ENCODE measurements at regions of chr12 and their contacts with region 1.

Region 1: DNA sequence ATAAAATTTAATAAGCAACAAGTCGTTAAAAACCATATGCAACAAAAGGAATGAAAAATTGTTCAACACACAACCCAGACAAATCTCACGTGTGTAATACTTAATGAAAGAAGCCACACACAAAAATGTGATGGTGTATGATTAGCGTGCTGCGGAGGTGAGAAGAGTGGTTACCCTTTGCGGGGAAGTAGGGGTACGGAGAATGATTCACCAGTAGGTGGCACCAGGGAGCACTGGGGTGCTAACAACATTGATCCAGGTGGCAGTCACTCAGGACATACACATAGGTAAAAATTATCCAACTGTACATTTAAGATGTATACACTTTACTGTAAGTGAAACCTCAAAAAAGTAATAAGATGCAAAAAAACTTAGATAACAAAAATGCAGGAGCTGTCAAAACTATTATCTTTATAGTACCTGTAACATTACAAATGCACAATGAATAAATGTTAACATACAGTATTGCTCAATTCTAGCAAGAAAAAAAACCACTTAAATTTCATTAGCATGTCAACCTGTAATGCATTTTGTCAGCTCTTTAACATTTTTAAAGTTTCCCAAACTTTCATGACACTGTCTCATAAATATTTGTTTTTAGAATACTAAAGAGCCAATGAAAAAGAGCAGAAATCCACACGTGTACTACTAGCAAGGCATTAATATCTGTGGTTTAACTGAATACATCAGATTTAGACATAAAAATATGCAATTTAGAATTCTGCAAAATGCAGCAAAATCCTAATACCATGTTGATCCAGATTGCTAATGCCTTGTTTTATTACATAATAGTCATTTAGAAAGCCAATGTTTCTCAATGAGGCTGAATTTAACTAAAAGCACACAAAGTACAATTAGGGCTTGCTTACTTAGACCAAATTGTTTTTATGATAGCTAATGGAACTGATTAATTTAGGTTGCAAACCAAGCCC is 46.7 kb downstream of the TMCC3 start:
- DNase-seq: peak in 7 of 9 donors; percentile 16 to 58 (median 37)
- ATAC-seq: peak; percentile 80
- H3K4me3 ChIP-seq: no peak overlapping the region
- H3K4me3 Mint-ChIP-seq: no peak overlapping the region
- H3K27ac ChIP-seq: no peak overlapping the region
- H3K27ac Mint-ChIP-seq: no peak overlapping the region
- H3K4me1 ChIP-seq: no peaks in the 10 kb centered on the region
- H3K4me1 Mint-ChIP-seq: peaks cover 0 to 7% (median 0%) of the 10 kb centered on the region in 7 donors
- H3K27me3 ChIP-seq: no peaks in the 10 kb centered on the region
- H3K27me3 Mint-ChIP-seq: peaks cover 3 to 41% (median 8%) of the 10 kb centered on the region in 5 donors

Region 2: DNA sequence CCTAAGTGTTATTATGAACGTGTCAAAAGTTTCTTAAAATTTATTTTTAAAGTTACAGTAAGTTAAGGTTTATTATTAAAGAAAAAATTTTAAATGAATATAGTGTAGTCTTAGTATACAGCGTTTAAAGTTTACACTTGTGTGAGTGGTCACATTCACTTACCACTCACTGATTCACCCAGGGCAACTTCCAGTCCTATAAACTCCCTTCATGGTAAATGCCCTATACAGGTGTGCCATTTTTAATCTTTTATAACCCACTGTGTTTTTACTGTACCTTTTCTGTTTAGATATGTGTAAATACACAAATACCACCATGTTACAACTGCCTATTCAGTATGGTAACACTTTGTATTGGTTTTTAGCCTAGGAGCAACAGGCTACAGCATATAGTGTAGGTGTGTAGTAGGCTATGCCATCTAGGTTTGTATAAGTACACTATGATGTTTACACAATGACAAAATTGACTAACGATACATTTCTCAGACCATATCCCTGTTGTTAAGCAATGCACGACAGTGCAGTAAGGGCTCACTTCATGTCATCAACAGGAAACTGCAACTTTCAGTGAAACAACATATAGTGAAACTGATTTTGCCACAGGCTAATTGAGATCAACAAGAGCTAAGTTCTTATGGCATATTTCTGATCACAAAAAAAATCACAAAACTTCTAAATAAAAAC is 158.7 kb after region 1 on chr12:
- CTCF ChIA-PET with region 1: no interaction called
- POLR2A ChIA-PET with region 1: no interaction called
- intact Hi-C with region 1: loop called (anchors 1 to 10 kb)
- DNase-seq: no peak
- ATAC-seq: peak; percentile 22
- H3K4me3 ChIP-seq: no peak overlapping the region
- H3K4me3 Mint-ChIP-seq: peak overlapping the region in 1 of 10 donors; percentile 17
- H3K27ac ChIP-seq: no peak overlapping the region
- H3K27ac Mint-ChIP-seq: peak overlapping the region in 2 of 9 donors; percentile 7 to 36
- H3K4me1 ChIP-seq: no peaks in the 10 kb centered on the region
- H3K4me1 Mint-ChIP-seq: peaks cover 0 to 12% (median 2%) of the 10 kb centered on the region in 7 donors
- H3K27me3 ChIP-seq: no peaks in the 10 kb centered on the region
- H3K27me3 Mint-ChIP-seq: peaks cover 0 to 16% (median 9%) of the 10 kb centered on the region in 5 donors